Sigmoid colon (tissue), 7 donors: ENCODE measurements at regions of chr10 and their contacts with region 1.

Region 1: DNA sequence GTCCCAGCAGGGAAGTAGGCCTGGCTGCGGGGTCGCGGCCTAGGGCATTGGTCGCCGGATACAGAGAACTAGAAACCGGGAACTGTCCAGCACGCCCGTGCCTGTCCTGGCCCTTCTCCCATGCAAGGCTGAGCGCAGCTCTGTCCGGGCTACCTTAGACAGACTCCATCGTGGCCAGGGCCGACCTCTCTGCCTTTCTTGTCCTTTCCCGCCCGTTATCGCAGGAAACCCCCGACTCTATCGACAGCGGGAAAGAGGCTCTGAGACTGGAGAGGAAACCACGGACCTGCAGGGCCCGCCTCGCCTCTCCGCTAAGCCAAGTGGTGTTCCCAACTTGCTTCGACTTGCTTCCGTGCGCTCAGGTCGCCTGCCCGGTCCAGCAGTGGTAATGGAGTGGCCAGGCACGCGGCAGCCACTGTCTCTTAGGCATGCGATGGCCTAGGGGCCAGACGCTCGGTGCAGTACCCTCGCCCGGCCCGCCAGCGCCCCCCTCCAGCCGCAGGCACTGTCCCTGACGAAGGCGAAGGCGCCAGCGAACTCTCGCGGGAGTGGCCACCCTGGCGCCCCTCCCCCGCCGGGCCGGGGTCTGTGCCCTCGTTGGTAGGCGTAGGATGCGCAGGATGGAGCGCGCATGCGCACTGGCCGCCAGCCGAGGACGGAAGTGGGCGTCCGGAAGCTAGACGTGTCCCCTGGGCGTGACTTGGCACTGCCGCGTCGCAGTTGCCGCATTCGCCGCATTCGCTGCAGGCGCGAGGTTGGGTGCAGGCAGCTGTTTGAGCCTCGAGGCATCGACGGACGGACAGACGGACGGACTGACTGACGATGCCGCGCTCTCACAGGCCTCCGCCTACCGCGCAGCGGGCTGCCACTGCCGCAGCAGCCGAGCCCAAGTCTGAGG is 54.4 kb downstream of the MCMBP start:
- DNase-seq: peak; percentile 89
- H3K4me3 ChIP-seq: peak overlapping the region; percentile 4 to 47 (median 41)
- H3K27ac ChIP-seq: peak overlapping the region; percentile 4 to 74 (median 55)
- H3K4me1 ChIP-seq: peaks cover 0 to 7% (median 5%) of the 10 kb centered on the region in 4 donors
- H3K27me3 ChIP-seq: no peaks in the 10 kb centered on the region
- CTCF ChIP-seq: peak in 1 of 4 experiments; percentile 6
- EP300 ChIP-seq: no peak
- POLR2A ChIP-seq: peak in 1 of 2 donors; percentile 19

Region 2: GRCh38 chr10:119761106-119761505 is 57.1 kb before region 1 on chr10:
- intact Hi-C with region 1: loop called (anchors 5 kb)
- DNase-seq: no peak
- H3K4me3 ChIP-seq: no peak overlapping the region
- H3K27ac ChIP-seq: peak overlapping the region; percentile 64 to 81 (median 77)
- H3K4me1 ChIP-seq: peaks cover 0 to 50% (median 45%) of the 10 kb centered on the region in 4 donors
- H3K27me3 ChIP-seq: no peaks in the 10 kb centered on the region
- CTCF ChIP-seq: no peak
- EP300 ChIP-seq: peak in 1 of 4 donors; percentile 24
- POLR2A ChIP-seq: no peak